ENCODE measurements at regions of chr15 and their contacts with region 1.

Region 1: GRCh38 chr15:75161917-75162414 is 39.7 kb upstream of the C15orf39 start:
- DNase-seq: no peak
- ATAC-seq: peak; percentile 21; the same call in 2 of the 3 replicates
- H3K4me3 ChIP-seq: no peak overlapping the region
- H3K27ac ChIP-seq: no peak overlapping the region
- H3K4me1 ChIP-seq: peaks cover 26 to 32% of the 10 kb centered on the region in 2 experiments
- H3K27me3 ChIP-seq: no peaks in the 10 kb centered on the region
- CTCF ChIP-seq: no peak
- EP300 ChIP-seq: no peak
- POLR2A ChIP-seq: no peak
- RAD21 ChIP-seq: no peak

Region 2: GRCh38 chr15:75130597-75131268 is 31.2 kb before region 1 on chr15:
- CTCF ChIA-PET with region 1: no interaction called
- POLR2A ChIA-PET with region 1: interaction called, 4 read pairs
- in situ Hi-C with region 1: no loop called
- intact Hi-C with region 1: loop called (anchors 5 kb)
- DNase-seq: no peak
- ATAC-seq: no peak
- H3K4me3 ChIP-seq: no peak overlapping the region
- H3K27ac ChIP-seq: no peak overlapping the region
- H3K4me1 ChIP-seq: peaks cover 4 to 7% of the 10 kb centered on the region in 2 experiments; a peak in 2 of 5 replicates
- H3K27me3 ChIP-seq: no peaks in the 10 kb centered on the region
- CTCF ChIP-seq: no peak
- EP300 ChIP-seq: no peak
- POLR2A ChIP-seq: no peak
- RAD21 ChIP-seq: no peak

Measured in K562 (cell line).